MCF 10A (cell line): ENCODE measurements at regions of chr1 and their contacts with region 1.

Region 1: GRCh38 chr1:225508538-225509375 is 80.9 kb upstream of the LBR start:
- DNase-seq: peak; percentile 99
- H3K4me3 Mint-ChIP-seq: no peak overlapping the region
- H3K27ac Mint-ChIP-seq: peak overlapping the region; percentile 83
- H3K4me1 Mint-ChIP-seq: peaks cover 32% of the 10 kb centered on the region
- H3K27me3 Mint-ChIP-seq: no peaks in the 10 kb centered on the region
- CTCF ChIP-seq: no peak

Region 2: GRCh38 chr1:225454733-225455132 is 54.0 kb before region 1 on chr1:
- CTCF ChIA-PET with region 1: interaction called, 3 read pairs
- POLR2A ChIA-PET with region 1: interaction called, 13 read pairs
- intact Hi-C with region 1: no loop called
- DNase-seq: peak; percentile 96
- H3K4me3 Mint-ChIP-seq: peak overlapping the region; percentile 2
- H3K27ac Mint-ChIP-seq: peak overlapping the region; percentile 60
- H3K4me1 Mint-ChIP-seq: peaks cover 61% of the 10 kb centered on the region
- H3K27me3 Mint-ChIP-seq: no peaks in the 10 kb centered on the region
- CTCF ChIP-seq: no peak

Region 3: DNA sequence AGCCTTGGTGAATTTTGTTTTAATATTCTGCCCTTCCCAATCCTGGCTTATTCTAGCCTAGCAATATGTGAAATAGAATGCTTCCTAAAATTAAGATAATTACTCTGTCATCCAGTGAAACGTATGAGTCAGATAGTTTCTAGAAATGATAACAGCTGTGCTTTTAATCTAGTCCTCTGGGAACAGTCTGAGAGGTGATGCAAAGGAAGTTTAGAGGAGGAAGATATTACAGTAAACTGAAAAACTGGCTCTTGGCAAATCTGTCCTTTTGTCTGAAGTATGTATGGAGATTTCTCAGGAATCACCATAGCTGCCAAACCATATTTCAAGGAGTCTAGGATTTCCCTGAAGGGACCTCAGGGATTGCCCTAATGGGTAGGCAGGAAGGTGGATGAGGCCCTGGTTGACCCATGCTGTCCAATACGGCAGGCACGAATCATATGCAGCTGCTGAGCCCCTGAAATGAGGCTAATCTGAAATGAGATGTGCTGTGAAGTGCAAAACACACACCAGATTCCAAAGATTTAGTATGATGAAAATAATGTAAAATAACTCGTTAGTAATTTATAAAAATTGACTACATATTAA is 10.1 kb before region 1 on chr1:
- CTCF ChIA-PET with region 1: interaction called, 3 read pairs
- POLR2A ChIA-PET with region 1: interaction called, 30 read pairs
- intact Hi-C with region 1: no loop called
- DNase-seq: no peak
- H3K4me3 Mint-ChIP-seq: no peak overlapping the region
- H3K27ac Mint-ChIP-seq: no peak overlapping the region
- H3K4me1 Mint-ChIP-seq: no peaks in the 10 kb centered on the region
- H3K27me3 Mint-ChIP-seq: no peaks in the 10 kb centered on the region
- CTCF ChIP-seq: no peak

Region 4: GRCh38 chr1:225544263-225544662 is 35.5 kb after region 1 on chr1:
- CTCF ChIA-PET with region 1: interaction called, 4 read pairs
- POLR2A ChIA-PET with region 1: interaction called, 17 read pairs
- intact Hi-C with region 1: no loop called
- DNase-seq: no peak
- H3K4me3 Mint-ChIP-seq: no peak overlapping the region
- H3K27ac Mint-ChIP-seq: no peak overlapping the region
- H3K4me1 Mint-ChIP-seq: peaks cover 12% of the 10 kb centered on the region
- H3K27me3 Mint-ChIP-seq: no peaks in the 10 kb centered on the region
- CTCF ChIP-seq: no peak

Region 5: GRCh38 chr1:225766967-225767633 is 258.3 kb after region 1 on chr1:
- CTCF ChIA-PET with region 1: interaction called, 45 read pairs
- POLR2A ChIA-PET with region 1: interaction called, 12 read pairs
- intact Hi-C with region 1: no loop called
- DNase-seq: peak; percentile 99
- H3K4me3 Mint-ChIP-seq: peak overlapping the region; percentile 40
- H3K27ac Mint-ChIP-seq: peak overlapping the region; percentile 78
- H3K4me1 Mint-ChIP-seq: peaks cover 38% of the 10 kb centered on the region
- H3K27me3 Mint-ChIP-seq: no peaks in the 10 kb centered on the region
- CTCF ChIP-seq: no peak

Region 6: DNA sequence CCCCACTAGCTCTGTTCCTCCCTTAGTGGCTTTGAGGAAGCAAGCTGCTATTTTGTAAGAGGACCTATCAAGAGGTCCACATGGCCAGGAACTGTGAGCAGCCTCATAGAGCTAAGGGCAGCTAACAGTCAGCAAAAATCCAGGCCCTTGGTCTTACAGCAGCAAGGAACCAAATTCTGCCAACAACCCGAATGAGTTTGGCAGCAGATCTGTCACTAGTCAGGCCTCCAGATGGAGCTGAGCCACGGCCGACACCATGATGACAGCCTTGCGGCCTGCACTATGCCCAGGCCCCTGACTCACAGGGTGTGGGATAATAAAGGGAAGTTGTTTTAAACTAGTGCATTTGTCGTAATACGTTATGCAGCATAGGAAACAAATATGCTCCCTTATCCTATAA is 525.7 kb after region 1 on chr1:
- CTCF ChIA-PET with region 1: no interaction called
- POLR2A ChIA-PET with region 1: no interaction called
- intact Hi-C with region 1: no loop called
- DNase-seq: peak; percentile 68
- H3K4me3 Mint-ChIP-seq: no peak overlapping the region
- H3K27ac Mint-ChIP-seq: peak overlapping the region; percentile 5
- H3K4me1 Mint-ChIP-seq: peaks cover 4% of the 10 kb centered on the region
- H3K27me3 Mint-ChIP-seq: no peaks in the 10 kb centered on the region
- CTCF ChIP-seq: no peak